ENCODE measurements at regions of chr4 and their contacts with region 1.

Region 1: DNA sequence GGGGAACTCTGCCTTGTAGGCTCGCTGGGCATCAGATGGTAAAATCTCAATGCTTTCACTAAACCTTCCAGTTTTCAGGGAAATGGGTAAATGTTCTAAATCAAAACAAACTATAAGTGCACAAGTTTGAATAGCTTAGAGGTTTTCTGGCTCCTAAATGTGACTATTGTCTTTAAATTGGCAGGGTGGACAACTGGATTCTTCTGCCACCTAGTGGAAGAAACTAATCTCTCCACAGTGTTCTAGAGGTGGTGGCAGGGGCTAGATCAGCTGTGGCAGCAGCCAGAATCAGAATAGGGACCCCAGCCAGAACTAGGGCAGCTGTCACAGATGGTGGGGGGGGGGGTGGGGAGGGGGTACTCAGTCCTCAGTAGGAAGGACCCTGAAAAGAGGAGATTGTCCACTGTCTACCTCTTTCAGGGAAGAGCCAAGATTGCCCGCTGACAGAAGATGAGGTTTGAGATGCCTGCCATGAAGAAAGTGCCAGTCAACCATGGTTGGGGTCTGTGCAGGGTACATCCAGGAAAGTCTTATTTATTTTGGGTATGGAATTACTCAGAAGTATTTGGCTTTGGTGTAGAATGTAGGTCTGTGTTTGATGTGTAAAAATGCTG is 201.4 kb downstream of the CCNG2 start:
- DNase-seq: peak; percentile 8 to 34
- ATAC-seq: peak; percentile 68 to 86; a peak in 4 of 6 replicates
- H3K4me3 ChIP-seq: no peak overlapping the region
- H3K27ac ChIP-seq: no peak overlapping the region
- H3K4me1 ChIP-seq: no peaks in the 10 kb centered on the region
- CTCF ChIP-seq: peak; percentile 43
- EP300 ChIP-seq: no peak
- POLR2A ChIP-seq: no peak
- RAD21 ChIP-seq: peak; percentile 49 to 55

Region 2: GRCh38 chr4:77240469-77241066 is 117.9 kb before region 1 on chr4:
- CTCF ChIA-PET with region 1: interaction called, 36 read pairs
- POLR2A ChIA-PET with region 1: no interaction called
- DNase-seq: peak; percentile 39 to 46
- ATAC-seq: peak; percentile 84 to 96
- H3K4me3 ChIP-seq: no peak overlapping the region
- H3K27ac ChIP-seq: no peak overlapping the region
- H3K4me1 ChIP-seq: no peaks in the 10 kb centered on the region
- CTCF ChIP-seq: peak; percentile 62
- EP300 ChIP-seq: no peak
- POLR2A ChIP-seq: no peak
- RAD21 ChIP-seq: peak; percentile 72 to 74

Region 3: DNA sequence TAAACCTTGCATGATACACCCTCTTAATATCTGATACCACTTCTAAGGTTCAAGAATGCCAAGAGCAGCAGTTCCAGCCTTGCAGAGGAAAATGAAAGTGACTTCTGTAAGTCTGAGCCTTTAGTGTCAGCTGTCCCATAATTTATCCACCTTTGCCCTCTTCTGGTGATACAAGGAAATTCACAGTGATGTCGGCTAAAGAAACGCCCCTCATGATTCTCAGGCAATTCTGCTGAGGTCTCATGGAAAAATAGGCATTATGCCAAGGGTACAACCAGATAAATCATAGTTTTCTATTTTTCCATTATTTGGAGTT is 75.0 kb after region 1 on chr4:
- CTCF ChIA-PET with region 1: interaction called, 17 read pairs
- POLR2A ChIA-PET with region 1: no interaction called
- DNase-seq: peak; percentile 21 to 50
- ATAC-seq: peak; percentile 74 to 82; a peak in 5 of 6 replicates
- H3K4me3 ChIP-seq: no peak overlapping the region
- H3K27ac ChIP-seq: no peak overlapping the region
- H3K4me1 ChIP-seq: no peaks in the 10 kb centered on the region
- CTCF ChIP-seq: peak; percentile 50
- EP300 ChIP-seq: no peak
- POLR2A ChIP-seq: no peak
- RAD21 ChIP-seq: peak; percentile 57 to 58

Measured in A549 (cell line).